PC-3 (cell line): ENCODE measurements at regions of chr20 and their contacts with region 1.

Region 1: DNA sequence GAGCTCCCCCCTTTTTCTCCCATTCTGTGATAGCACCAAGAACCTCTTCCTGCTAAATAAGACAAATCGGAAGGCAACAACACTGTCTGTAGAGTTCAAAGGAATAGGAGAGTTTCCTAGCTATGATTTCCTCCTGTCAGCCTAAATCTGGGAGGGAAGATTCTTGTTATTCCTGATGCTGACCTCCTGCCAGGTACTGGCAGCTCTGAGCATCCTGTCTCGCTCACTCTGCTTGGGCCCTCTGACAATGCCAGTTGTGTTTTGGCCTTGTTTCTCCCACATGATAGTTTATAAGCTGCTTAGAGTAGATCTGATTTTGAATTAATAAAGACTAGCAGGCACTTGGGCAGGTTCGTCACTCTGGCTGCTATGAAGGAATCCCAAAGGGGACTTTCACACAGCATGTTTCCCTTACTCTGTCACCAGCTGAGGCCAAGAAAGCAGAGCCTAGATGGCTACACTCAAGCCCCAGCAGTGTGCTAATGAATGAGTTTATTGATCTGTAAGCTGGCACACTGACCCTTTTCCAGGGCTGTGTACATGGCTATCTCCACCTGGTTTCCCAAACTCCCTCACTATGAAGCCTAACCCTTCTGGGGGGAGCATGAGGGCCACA is 52.3 kb downstream of the UQCC1 start:
- DNase-seq: peak; percentile 10
- ATAC-seq: peak; percentile 21
- H3K4me3 ChIP-seq: no peak overlapping the region
- H3K27ac ChIP-seq: no peak overlapping the region
- H3K4me1 ChIP-seq: peaks cover 33% of the 10 kb centered on the region
- H3K27me3 ChIP-seq: no peaks in the 10 kb centered on the region
- CTCF ChIP-seq: no peak

Region 2: GRCh38 chr20:35296101-35296554 is 63.3 kb before region 1 on chr20:
- CTCF ChIA-PET with region 1: no interaction called
- POLR2A ChIA-PET with region 1: no interaction called
- intact Hi-C with region 1: no loop called
- DNase-seq: no peak
- ATAC-seq: no peak
- H3K4me3 ChIP-seq: no peak overlapping the region
- H3K27ac ChIP-seq: no peak overlapping the region
- H3K4me1 ChIP-seq: peaks cover 9% of the 10 kb centered on the region
- H3K27me3 ChIP-seq: no peaks in the 10 kb centered on the region
- CTCF ChIP-seq: no peak

Region 3: GRCh38 chr20:35447082-35447789 is 87.8 kb after region 1 on chr20:
- CTCF ChIA-PET with region 1: no interaction called
- POLR2A ChIA-PET with region 1: no interaction called
- intact Hi-C with region 1: loop called (anchors 5 kb)
- DNase-seq: peak; percentile 96
- ATAC-seq: peak; percentile 94
- H3K4me3 ChIP-seq: peak overlapping the region; percentile 62; the same call in 1 of the 2 replicates
- H3K27ac ChIP-seq: no peak overlapping the region
- H3K4me1 ChIP-seq: no peaks in the 10 kb centered on the region; the same call in 1 of the 2 replicates
- H3K27me3 ChIP-seq: no peaks in the 10 kb centered on the region
- CTCF ChIP-seq: peak; percentile 88

Region 4: DNA sequence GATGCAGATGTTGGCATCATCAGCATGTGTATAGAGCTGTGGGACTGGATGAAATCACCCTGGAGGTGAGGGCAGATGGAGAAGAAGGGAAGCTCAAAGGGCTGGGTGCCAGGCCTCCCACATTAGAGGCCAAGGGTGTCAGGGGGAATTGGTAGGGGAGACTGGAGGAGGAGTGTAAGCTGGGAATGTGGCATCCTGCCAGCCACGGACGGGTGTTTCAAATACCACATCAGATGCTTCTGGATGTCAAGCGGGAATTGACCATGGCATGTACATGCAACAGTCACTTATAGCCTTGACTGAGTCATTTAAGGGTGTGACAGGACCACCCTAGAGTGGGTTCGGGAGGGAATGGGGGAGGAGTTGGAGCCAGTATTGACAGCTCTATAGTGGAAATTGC is 192.1 kb after region 1 on chr20:
- CTCF ChIA-PET with region 1: no interaction called
- POLR2A ChIA-PET with region 1: no interaction called
- intact Hi-C with region 1: no loop called
- DNase-seq: no peak
- ATAC-seq: no peak
- H3K4me3 ChIP-seq: no peak overlapping the region
- H3K27ac ChIP-seq: no peak overlapping the region
- H3K4me1 ChIP-seq: no peaks in the 10 kb centered on the region
- H3K27me3 ChIP-seq: no peaks in the 10 kb centered on the region
- CTCF ChIP-seq: no peak